AG04449 (cell line): ENCODE measurements at regions of chr4 and their contacts with region 1.

Region 1: GRCh38 chr4:25312496-25313200 is at the start of gene ZCCHC4:
- DNase-seq: peak; percentile 54
- H3K4me3 ChIP-seq: peak within 1 kb of the TSS; percentile 99
- CTCF ChIP-seq: peak; percentile 99

Region 2: DNA sequence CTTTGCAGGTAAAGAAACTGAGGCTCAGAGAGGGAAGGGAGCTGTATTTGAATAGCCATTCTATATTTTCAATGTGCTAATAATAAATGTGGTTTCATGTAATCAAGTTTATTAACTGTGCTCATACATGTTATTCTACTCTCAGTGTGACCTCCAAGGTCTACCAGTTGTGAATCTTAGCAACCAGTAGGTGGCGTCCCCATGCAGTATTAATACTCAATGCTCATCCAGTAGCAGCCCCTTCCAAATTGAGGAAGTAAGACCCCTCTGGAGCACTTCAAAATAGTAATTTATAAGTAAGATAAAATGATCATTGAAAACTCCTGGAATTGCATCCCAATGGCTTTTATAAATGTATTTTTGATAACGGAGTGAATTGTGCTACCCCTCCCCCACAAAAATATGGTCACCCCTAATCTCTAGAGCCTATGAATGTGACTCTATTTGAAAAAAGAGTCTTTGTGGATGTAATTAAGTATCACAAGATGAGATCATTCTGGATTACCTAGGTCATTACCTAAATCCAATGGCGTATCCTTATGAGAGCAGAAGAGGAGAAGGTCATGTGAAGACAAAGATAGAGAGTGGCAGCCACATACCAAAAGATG is 132.0 kb before region 1 on chr4:
- CTCF ChIA-PET with region 1: interaction called, 12 read pairs
- POLR2A ChIA-PET with region 1: no interaction called
- DNase-seq: no peak
- H3K4me3 ChIP-seq: no peak overlapping the region
- CTCF ChIP-seq: peak; percentile 56

Region 3: GRCh38 chr4:25271866-25272265 is 40.8 kb before region 1 on chr4:
- CTCF ChIA-PET with region 1: interaction called, 12 read pairs
- POLR2A ChIA-PET with region 1: no interaction called
- DNase-seq: no peak
- H3K4me3 ChIP-seq: no peak overlapping the region
- CTCF ChIP-seq: no peak

Region 4: GRCh38 chr4:25299480-25300188 is 13.0 kb before region 1 on chr4:
- CTCF ChIA-PET with region 1: interaction called, 41 read pairs
- POLR2A ChIA-PET with region 1: interaction called, 3 read pairs
- DNase-seq: no peak
- H3K4me3 ChIP-seq: no peak overlapping the region
- CTCF ChIP-seq: no peak

Region 5: DNA sequence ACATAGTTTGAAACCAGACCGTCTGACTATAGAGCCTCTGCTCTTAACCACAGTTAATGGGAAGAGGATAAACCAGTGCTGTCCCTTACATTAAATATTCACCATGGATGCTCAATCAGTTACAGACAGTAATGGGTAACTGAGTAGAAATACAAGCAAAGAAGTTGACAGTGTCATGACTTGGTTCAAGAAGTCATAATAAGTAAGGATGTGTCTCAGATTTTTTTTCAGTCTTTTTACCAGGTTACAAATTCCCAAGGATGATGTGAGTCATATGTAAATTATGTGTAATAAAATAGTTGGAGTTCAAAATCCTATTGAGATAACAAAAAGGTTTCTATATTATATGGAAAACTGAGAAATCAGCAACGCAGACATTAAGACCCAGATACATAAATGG is 31.0 kb after region 1 on chr4:
- CTCF ChIA-PET with region 1: interaction called, 11 read pairs
- POLR2A ChIA-PET with region 1: no interaction called
- DNase-seq: no peak
- H3K4me3 ChIP-seq: no peak overlapping the region
- CTCF ChIP-seq: no peak

Region 6: DNA sequence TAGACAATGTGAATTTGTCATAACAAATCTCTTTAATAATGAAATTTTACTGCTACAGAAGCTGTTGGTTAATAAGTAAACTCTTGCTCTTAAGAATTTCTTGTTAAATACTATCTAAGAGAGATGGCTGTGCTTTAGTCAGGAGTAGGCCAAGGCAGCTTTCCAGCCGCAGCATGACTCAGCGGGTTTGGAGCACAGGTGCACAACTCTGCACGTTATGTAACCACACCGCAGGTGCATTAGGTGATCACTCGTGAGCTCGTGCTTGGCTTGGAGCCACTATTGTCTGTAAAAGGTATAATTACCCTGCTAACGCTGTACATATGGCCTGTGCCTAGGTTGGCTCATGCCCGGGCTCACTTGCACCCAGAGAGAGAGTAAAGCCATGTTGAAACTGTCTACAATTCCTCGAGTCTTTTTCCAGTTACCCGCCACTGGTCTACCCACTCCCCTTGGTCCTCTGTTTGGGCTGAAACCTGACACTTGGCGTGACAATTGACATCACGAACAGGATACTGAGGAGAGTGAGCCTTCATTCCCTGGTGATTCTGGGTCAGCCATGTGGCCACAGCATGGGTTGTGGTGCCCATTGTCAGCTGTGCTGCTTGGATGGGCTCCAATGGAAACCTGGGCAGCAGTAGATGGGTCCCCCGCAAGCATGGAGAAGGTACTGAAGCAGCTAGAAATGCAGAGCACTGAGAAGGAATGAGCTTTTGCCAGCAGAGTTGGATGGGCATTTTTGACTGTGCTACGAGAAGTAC is 46.0 kb after region 1 on chr4:
- CTCF ChIA-PET with region 1: interaction called, 27 read pairs
- POLR2A ChIA-PET with region 1: no interaction called
- DNase-seq: no peak
- H3K4me3 ChIP-seq: no peak overlapping the region
- CTCF ChIP-seq: no peak

Region 7: DNA sequence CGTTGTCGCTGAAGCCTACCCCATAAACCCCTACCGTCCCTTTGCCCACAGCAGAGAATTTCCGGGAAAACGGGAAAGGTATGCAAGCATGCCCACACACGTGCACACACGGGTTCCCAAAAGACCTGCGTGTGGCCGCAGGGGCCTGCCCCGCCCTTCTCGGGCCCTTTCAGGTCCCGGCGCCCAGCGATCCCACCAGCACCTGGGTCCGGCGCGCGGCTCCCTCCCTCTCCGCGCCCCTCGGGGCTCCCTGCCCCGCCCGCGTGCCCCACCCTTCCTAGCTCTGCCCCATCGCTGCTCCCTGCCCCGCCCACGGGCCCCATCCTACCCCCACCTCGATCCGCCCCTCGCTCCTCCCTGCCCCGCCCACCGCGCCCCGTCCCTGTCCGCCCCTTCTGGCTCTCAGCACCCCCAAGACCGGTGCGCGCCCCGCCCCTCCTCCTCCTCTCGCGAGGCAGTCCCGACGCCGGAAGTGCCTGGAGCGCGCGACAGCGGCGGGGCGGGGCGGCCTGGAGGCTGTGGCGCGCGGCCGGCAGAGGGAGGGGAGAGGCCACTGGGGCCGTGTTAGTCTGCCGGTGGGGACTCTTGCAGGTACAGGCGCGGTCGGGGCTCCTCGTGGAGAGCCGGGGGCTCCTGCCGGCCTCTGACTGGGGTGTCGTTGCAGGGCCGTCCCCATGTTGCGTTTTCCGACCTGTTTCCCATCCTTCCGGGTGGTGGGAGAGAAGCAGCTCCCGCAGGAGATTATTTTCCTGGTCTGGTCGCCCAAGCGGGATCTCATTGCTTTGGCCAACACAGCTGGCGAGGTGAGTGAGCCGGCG is 64.3 kb after region 1 on chr4 and contains the start of gene ANAPC4:
- CTCF ChIA-PET with region 1: interaction called, 12 read pairs
- POLR2A ChIA-PET with region 1: no interaction called
- DNase-seq: peak; percentile 19
- H3K4me3 ChIP-seq: peak within 1 kb of the TSS; percentile 89
- CTCF ChIP-seq: peak; percentile 3